Heart right ventricle (tissue), 16 donors: ENCODE measurements at regions of chr5 and their contacts with region 1.

Region 1: DNA sequence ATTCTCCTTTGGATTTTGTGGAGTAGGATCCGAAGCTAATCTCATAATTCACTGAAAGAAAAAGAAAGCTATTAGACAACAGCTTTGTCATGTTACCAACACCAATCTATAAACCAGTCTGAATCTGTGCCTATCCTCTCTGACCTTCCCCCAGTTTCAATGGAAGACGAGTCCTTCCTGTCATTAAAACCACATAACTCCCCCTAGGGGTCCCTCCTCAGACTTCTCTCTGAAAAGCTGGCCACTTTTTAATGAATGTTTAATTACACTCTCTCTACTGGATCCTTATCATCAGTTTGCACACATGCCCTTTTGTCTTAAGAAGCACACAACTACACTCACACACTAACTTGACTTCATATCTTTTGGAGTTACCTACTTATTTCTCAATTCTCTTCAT is 98.0 kb upstream of the TSLP start:
- DNase-seq: no peak
- ATAC-seq: no peak
- H3K4me3 ChIP-seq: no peak overlapping the region
- H3K27ac ChIP-seq: no peak overlapping the region
- H3K4me1 ChIP-seq: no peaks in the 10 kb centered on the region
- H3K27me3 ChIP-seq: no peaks in the 10 kb centered on the region
- CTCF ChIP-seq: no peak

Region 2: DNA sequence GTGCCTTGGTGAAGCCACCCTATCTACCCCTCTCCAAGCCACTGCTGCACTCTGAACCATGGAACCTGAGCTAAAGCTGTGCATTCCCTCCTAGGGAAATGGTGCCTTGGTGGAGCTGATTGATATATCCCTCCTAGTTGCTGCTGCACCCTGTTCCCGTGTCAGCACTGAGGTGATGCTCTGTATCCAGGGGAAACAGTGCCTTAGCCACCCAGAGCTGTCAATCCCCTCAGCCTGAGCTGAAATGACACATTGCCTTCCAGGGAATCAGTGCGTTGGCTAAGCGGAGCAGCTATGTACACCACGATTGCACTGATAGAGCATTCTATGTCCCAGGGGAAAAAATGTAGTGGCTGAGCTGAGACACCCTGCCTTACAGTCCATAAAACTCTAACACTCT is 504.0 kb before region 1 on chr5:
- intact Hi-C with region 1: no loop called
- DNase-seq: no peak
- ATAC-seq: no peak
- H3K4me3 ChIP-seq: no peak overlapping the region
- H3K27ac ChIP-seq: no peak overlapping the region
- H3K4me1 ChIP-seq: no peaks in the 10 kb centered on the region
- H3K27me3 ChIP-seq: no peaks in the 10 kb centered on the region
- CTCF ChIP-seq: no peak

Region 3: GRCh38 chr5:110769000-110769681 is 204.4 kb before region 1 on chr5:
- intact Hi-C with region 1: no loop called
- DNase-seq: no peak
- ATAC-seq: no peak
- H3K4me3 ChIP-seq: no peak overlapping the region
- H3K27ac ChIP-seq: no peak overlapping the region
- H3K4me1 ChIP-seq: peaks cover 0 to 4% (median 0%) of the 10 kb centered on the region in 9 donors
- H3K27me3 ChIP-seq: peaks cover 0 to 2% (median 0%) of the 10 kb centered on the region in 7 donors
- CTCF ChIP-seq: no peak

Region 4: DNA sequence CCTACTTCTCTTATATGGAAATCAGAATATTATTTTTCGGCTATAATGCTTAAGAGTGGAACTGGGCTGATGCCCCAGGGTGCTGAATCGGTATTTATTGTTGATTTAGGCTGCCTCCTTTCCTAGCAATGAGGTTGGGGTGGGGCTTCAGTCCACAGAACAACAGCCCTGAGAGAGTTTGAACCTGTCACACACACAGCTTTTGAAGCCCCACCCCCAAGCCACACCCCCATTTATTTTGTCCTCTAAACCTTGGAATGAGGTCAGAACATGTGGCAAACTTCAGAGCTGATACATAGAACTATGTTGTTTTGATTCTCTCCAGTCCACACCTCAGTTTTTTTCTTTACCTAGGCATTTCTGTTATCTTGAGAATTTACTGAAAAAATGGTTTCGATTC is 199.0 kb after region 1 on chr5:
- intact Hi-C with region 1: no loop called
- DNase-seq: no peak
- ATAC-seq: no peak
- H3K4me3 ChIP-seq: no peak overlapping the region
- H3K27ac ChIP-seq: no peak overlapping the region
- H3K4me1 ChIP-seq: peaks cover 0 to 7% (median 0%) of the 10 kb centered on the region in 9 donors
- H3K27me3 ChIP-seq: peaks cover 0 to 15% (median 0%) of the 10 kb centered on the region in 7 donors
- CTCF ChIP-seq: no peak

Region 5: GRCh38 chr5:111968459-111968858 is 994.9 kb after region 1 on chr5:
- intact Hi-C with region 1: loop called in 1 of 10 experiments (anchors 5 kb)
- DNase-seq: no peak
- ATAC-seq: peak in 2 of 8 donors; percentile 44 to 71
- H3K4me3 ChIP-seq: no peak overlapping the region
- H3K27ac ChIP-seq: no peak overlapping the region
- H3K4me1 ChIP-seq: peaks cover 0 to 11% (median 0%) of the 10 kb centered on the region in 9 donors
- H3K27me3 ChIP-seq: no peaks in the 10 kb centered on the region
- CTCF ChIP-seq: no peak